GM12878 (cell line): ENCODE measurements at regions of chr9 and their contacts with region 1.

Region 1: DNA sequence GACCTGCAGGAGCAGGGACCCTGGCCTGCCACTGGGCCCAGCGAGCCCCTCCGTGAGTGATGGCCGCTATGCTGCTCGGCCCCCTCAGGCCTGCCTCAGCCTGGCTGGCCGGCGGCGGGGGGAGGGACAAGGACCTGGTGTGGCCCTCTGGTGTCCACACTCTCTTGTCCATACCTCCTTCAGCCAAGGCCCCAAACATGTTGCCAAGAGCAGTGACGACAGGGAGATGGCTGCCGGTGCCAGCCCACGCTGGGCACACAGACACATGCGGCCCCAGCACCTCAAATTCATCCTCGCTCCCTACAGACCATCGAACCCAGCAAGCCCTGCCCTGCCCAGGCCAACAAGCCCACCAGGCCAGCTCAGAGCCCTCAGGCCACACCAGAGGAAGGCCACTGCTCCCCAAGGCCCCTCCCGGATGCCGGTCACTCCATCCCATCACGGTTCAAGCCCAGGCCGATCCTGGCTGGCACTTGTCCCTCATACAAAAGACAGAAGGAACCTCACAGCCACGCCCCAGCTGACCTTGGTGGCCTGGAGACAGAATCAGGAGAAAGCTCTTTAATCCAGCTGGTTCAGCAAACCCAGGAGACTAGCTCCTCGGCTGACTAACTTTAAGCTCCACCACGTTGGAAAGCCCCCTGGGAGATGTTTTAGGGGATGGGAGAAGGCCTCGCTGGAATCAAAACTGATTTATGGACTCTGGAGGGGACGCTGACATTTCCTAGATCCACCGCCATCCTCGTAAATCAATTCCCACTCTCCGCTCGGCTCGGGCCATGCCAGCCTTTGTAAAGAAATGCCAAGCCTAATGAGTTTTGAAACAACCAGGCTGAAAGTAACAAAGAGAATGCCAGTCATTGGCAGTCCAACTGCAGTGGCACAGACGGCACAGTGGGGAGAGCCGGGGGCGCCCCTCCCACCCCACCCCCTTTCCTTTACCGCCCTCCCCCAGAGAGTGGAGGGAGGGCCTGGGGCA is 84.9 kb downstream of the VAV2 start:
- DNase-seq: no peak
- ATAC-seq: no peak
- H3K4me3 ChIP-seq: no peak overlapping the region
- H3K27ac ChIP-seq: no peak overlapping the region
- H3K4me1 ChIP-seq: peaks cover 14% of the 10 kb centered on the region
- H3K27me3 ChIP-seq: no peaks in the 10 kb centered on the region
- CTCF ChIP-seq: no peak
- EP300 ChIP-seq: no peak
- POLR2A ChIP-seq: no peak
- RAD21 ChIP-seq: no peak

Region 2: GRCh38 chr9:133527444-133527920 is 379.7 kb before region 1 on chr9:
- CTCF ChIA-PET with region 1: no interaction called
- POLR2A ChIA-PET with region 1: no interaction called
- RAD21 ChIA-PET with region 1: no interaction called
- SMC1A ChIA-PET with region 1: no interaction called
- in situ Hi-C with region 1: no loop called
- intact Hi-C with region 1: no loop called
- DNase-seq: no peak
- ATAC-seq: no peak
- H3K4me3 ChIP-seq: no peak overlapping the region
- H3K27ac ChIP-seq: no peak overlapping the region
- H3K4me1 ChIP-seq: no peaks in the 10 kb centered on the region
- H3K27me3 ChIP-seq: peaks cover 2 to 9% of the 10 kb centered on the region in 2 experiments; a peak in 3 of 4 replicates
- CTCF ChIP-seq: no peak
- EP300 ChIP-seq: no peak
- POLR2A ChIP-seq: no peak
- RAD21 ChIP-seq: no peak

Region 3: DNA sequence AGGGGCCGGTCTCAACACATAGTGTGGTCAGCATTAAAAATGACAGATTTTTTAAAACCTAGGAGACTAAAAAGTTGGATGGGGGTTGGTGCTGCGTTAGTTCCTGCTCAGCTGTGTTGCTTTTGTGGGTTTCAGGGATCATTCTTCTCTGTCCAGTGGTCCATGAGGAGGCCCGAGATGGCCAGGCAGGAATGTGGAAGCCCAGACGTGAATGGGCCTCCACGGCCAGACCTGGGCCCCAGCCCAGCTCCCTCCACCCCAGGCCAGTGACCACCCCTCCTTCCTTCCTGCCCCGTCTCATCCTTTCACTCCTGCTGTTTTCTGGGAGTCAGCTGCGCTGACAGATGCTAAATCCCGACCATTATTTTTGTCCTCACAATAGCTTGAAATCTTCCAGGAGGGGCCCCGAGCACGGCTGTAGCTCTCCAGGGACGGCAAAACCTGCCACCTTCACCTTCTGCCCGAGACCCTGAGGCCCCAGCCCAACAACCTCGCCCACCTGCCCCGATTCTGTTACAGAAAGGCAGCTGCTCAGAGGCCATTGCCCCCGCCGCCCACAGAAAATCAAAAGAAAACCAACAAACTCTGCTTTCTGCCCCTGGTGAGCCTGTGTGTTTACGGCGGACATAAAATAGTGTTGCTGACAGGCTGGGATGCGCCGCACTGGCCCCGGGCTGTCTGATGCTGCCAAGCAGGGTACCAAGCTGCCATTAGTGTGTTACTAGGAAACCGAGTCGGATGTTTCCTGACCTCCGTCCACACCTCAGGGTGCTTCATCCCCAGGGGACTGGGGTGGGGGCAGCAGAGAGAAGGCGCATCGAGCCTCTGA is 85.4 kb before region 1 on chr9:
- CTCF ChIA-PET with region 1: no interaction called
- POLR2A ChIA-PET with region 1: no interaction called
- RAD21 ChIA-PET with region 1: no interaction called
- SMC1A ChIA-PET with region 1: no interaction called
- in situ Hi-C with region 1: no loop called
- intact Hi-C with region 1: loop called (anchors 5 kb)
- DNase-seq: no peak
- ATAC-seq: peak; percentile 47
- H3K4me3 ChIP-seq: 0 out of 2 replicates have a peak overlapping the region, but pooled peaks have one; percentile 5
- H3K27ac ChIP-seq: peak overlapping the region; percentile 77
- H3K4me1 ChIP-seq: peaks cover 37% of the 10 kb centered on the region
- H3K27me3 ChIP-seq: no peaks in the 10 kb centered on the region
- CTCF ChIP-seq: no peak
- EP300 ChIP-seq: no peak
- POLR2A ChIP-seq: 0 out of 2 replicates have a peak, but pooled peaks have one; percentile 40
- RAD21 ChIP-seq: no peak

Region 4: GRCh38 chr9:133930682-133931485 is 23.7 kb after region 1 on chr9:
- CTCF ChIA-PET with region 1: no interaction called
- POLR2A ChIA-PET with region 1: no interaction called
- RAD21 ChIA-PET with region 1: no interaction called
- SMC1A ChIA-PET with region 1: no interaction called
- in situ Hi-C with region 1: no loop called
- intact Hi-C with region 1: no loop called
- DNase-seq: no peak
- ATAC-seq: no peak
- H3K4me3 ChIP-seq: no peak overlapping the region
- H3K27ac ChIP-seq: no peak overlapping the region
- H3K4me1 ChIP-seq: peaks cover 11% of the 10 kb centered on the region
- H3K27me3 ChIP-seq: no peaks in the 10 kb centered on the region
- CTCF ChIP-seq: no peak
- EP300 ChIP-seq: no peak
- POLR2A ChIP-seq: no peak; the same call in 1 of the 2 replicates
- RAD21 ChIP-seq: no peak

Region 5: GRCh38 chr9:134054891-134055811 is 147.9 kb after region 1 on chr9:
- CTCF ChIA-PET with region 1: no interaction called
- POLR2A ChIA-PET with region 1: no interaction called
- RAD21 ChIA-PET with region 1: no interaction called
- SMC1A ChIA-PET with region 1: no interaction called
- in situ Hi-C with region 1: no loop called
- intact Hi-C with region 1: no loop called
- DNase-seq: no peak
- ATAC-seq: no peak
- H3K4me3 ChIP-seq: no peak overlapping the region
- H3K27ac ChIP-seq: no peak overlapping the region
- H3K4me1 ChIP-seq: peaks cover 9% of the 10 kb centered on the region
- H3K27me3 ChIP-seq: no peaks in the 10 kb centered on the region
- CTCF ChIP-seq: no peak
- EP300 ChIP-seq: no peak
- POLR2A ChIP-seq: no peak
- RAD21 ChIP-seq: no peak

Region 6: GRCh38 chr9:134065601-134066419 is 158.6 kb after region 1 on chr9:
- CTCF ChIA-PET with region 1: no interaction called
- POLR2A ChIA-PET with region 1: no interaction called
- RAD21 ChIA-PET with region 1: no interaction called
- SMC1A ChIA-PET with region 1: no interaction called
- in situ Hi-C with region 1: no loop called
- intact Hi-C with region 1: no loop called
- DNase-seq: peak; percentile 53
- ATAC-seq: peak; percentile 80
- H3K4me3 ChIP-seq: peak overlapping the region; percentile 93
- H3K27ac ChIP-seq: peak overlapping the region; percentile 82
- H3K4me1 ChIP-seq: peaks cover 8% of the 10 kb centered on the region
- H3K27me3 ChIP-seq: peaks cover 3% of the 10 kb centered on the region in 2 experiments; a peak in 2 of 4 replicates
- CTCF ChIP-seq: no peak
- EP300 ChIP-seq: 0 out of 4 replicates have a peak, but pooled peaks of 1 of the 2 experiments have one; percentile 31
- POLR2A ChIP-seq: peak; percentile 51; the same call in 1 of the 2 replicates
- RAD21 ChIP-seq: no peak